GM10248 (cell line): ENCODE measurements at regions of chr2 and their contacts with region 1.

Region 1: GRCh38 chr2:64295326-64296139 is 151.3 kb upstream of the PELI1 start:
- DNase-seq: peak; percentile 60
- CTCF ChIP-seq: no peak

Region 2: GRCh38 chr2:64318476-64318748 is 22.9 kb after region 1 on chr2:
- CTCF ChIA-PET with region 1: interaction called, 22 read pairs
- POLR2A ChIA-PET with region 1: no interaction called
- DNase-seq: no peak
- CTCF ChIP-seq: no peak

Region 3: GRCh38 chr2:64359892-64360657 is 64.5 kb after region 1 on chr2:
- CTCF ChIA-PET with region 1: no interaction called
- POLR2A ChIA-PET with region 1: no interaction called
- DNase-seq: peak; percentile 54
- CTCF ChIP-seq: no peak

Region 4: GRCh38 chr2:64374686-64375085 is 79.2 kb after region 1 on chr2:
- CTCF ChIA-PET with region 1: no interaction called
- POLR2A ChIA-PET with region 1: no interaction called
- DNase-seq: no peak
- CTCF ChIP-seq: no peak